ENCODE measurements at regions of chr11 and their contacts with region 1.

Region 1: DNA sequence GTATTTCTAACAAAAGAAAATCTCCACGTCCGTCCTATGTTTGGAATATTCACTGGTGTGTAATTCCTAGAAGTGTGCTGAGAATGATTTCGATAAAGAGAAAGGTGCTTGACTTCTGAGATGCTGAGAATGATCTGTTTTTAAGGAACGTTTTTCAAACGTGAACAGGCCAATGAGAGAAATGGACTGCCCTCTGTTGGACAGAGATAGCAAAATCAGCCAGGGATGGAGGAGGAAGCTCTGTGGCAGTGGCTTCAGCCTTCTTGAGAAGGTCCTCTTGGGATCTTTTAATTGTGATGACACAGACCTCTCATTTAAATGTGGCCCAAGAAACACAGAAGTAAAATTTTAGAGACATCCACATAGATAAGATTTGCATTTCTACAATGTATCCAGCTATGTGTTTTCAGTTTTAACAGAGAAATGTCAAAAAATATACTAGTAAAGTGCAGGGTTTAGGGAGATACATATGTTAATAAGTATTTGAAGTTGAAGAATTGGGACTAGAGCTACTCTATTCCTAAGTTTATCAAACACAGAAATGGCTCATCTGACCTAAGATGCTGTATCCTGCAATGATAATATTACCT is 84.0 kb upstream of the RCN1 start:
- DNase-seq: peak; percentile 51
- ATAC-seq: peak; percentile 85
- H3K4me3 ChIP-seq: no peak overlapping the region
- H3K27ac ChIP-seq: no peak overlapping the region
- H3K4me1 ChIP-seq: 0 out of 2 replicates have a peak, but pooled peaks cover under 1% of the 10 kb centered on the region
- H3K27me3 ChIP-seq: peaks cover 43% of the 10 kb centered on the region
- CTCF ChIP-seq: peak; percentile 63
- POLR2A ChIP-seq: no peak
- RAD21 ChIP-seq: peak; percentile 65

Region 2: DNA sequence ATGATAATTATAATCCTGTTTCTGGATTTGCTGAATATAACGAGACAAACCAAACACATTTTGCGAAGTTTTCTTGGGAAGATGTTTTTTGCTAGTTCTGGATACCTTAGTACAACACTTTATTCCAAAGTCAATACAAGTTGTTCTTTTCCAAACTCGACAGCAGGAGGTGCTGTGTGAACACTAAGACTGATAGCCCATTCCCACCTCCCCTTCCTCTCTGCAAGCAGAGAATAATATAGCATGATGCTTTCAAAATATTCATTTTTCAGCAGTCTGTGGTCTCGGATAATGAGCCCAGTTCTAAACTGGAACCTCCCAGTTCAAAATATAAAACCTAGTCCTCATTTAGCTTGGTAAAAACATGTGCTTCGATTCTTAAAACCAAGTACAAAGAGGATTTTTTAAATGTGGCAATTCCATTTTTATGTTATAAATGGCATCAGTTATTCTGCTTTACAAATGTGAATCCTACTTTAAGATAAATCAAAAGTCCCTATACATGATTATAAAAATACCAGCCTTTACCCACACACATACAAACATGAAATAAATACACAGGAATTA is 766.5 kb before region 1 on chr11:
- CTCF ChIA-PET with region 1: no interaction called
- POLR2A ChIA-PET with region 1: no interaction called
- dilution Hi-C with region 1: no loop called
- in situ Hi-C with region 1: no loop called
- intact Hi-C with region 1: loop called (anchors 5 kb)
- DNase-seq: peak; percentile 33
- ATAC-seq: no peak; the same call in 1 of the 2 replicates
- H3K4me3 ChIP-seq: no peak overlapping the region
- H3K27ac ChIP-seq: no peak overlapping the region
- H3K4me1 ChIP-seq: no peaks in the 10 kb centered on the region
- H3K27me3 ChIP-seq: no peaks in the 10 kb centered on the region
- CTCF ChIP-seq: peak; percentile 45
- POLR2A ChIP-seq: no peak
- RAD21 ChIP-seq: peak; percentile 43; the same call in 1 of the 2 replicates

Region 3: DNA sequence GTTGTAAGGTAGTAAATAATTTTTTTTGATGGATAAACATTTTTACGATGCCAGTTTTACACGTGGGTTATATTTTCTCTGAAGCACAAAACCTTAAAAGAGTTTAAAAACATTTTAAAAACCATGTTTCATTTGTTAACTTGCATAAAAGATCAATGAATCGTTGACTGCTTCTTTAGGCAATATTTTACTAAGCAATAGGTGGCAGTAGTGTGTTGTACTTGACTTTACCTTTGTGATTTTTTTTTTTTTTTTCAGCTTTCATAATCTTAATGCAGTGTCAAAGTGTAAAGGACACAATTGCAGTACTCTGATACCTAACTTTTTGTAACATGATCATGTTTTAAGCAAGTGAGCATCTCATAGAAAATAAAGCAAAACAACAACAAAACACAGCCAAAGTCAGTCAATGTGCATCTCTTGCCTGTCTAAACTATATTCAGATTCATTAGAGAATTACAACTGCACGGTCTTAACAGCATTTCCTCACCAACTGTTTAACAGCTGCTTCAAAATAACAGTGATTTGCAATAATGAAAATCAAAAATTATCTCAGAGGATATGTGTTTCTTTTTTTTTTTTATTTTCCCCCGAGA is 609.6 kb before region 1 on chr11:
- CTCF ChIA-PET with region 1: interaction called, 3 read pairs
- POLR2A ChIA-PET with region 1: no interaction called
- dilution Hi-C with region 1: no loop called
- in situ Hi-C with region 1: no loop called
- intact Hi-C with region 1: loop called (anchors 2 kb)
- DNase-seq: peak; percentile 22
- ATAC-seq: peak; percentile 54; the same call in 1 of the 2 replicates
- H3K4me3 ChIP-seq: no peak overlapping the region
- H3K27ac ChIP-seq: no peak overlapping the region
- H3K4me1 ChIP-seq: no peaks in the 10 kb centered on the region
- H3K27me3 ChIP-seq: no peaks in the 10 kb centered on the region
- CTCF ChIP-seq: peak; percentile 74
- POLR2A ChIP-seq: no peak
- RAD21 ChIP-seq: peak; percentile 77

Region 4: DNA sequence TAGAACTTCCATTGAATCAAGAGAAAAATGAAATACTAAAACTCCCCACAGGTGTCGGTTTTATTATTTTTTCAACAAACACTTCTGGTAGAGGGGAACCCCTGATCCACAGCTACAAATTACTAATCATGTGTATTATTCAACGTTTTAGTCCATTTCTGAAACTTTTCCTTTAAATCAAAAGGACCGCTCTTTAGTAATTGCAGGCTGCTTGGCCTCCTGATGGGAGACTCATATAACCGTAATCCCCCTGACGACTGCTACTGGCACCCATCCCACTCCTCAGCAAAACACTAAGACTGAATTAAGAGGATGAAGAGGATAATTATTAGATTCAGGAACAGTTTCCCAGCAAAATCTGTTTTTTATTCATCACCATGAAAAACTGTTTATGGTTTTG is 242.1 kb before region 1 on chr11:
- CTCF ChIA-PET with region 1: no interaction called
- POLR2A ChIA-PET with region 1: no interaction called
- dilution Hi-C with region 1: no loop called
- in situ Hi-C with region 1: no loop called
- intact Hi-C with region 1: no loop called
- DNase-seq: no peak
- ATAC-seq: no peak
- H3K4me3 ChIP-seq: no peak overlapping the region
- H3K27ac ChIP-seq: no peak overlapping the region
- H3K4me1 ChIP-seq: no peaks in the 10 kb centered on the region
- H3K27me3 ChIP-seq: no peaks in the 10 kb centered on the region
- CTCF ChIP-seq: no peak
- POLR2A ChIP-seq: no peak
- RAD21 ChIP-seq: no peak

Region 5: GRCh38 chr11:32081129-32081641 is 74.3 kb after region 1 on chr11:
- CTCF ChIA-PET with region 1: no interaction called
- POLR2A ChIA-PET with region 1: no interaction called
- dilution Hi-C with region 1: no loop called
- in situ Hi-C with region 1: no loop called
- intact Hi-C with region 1: no loop called
- DNase-seq: peak; percentile 64
- ATAC-seq: peak; percentile 82
- H3K4me3 ChIP-seq: no peak overlapping the region
- H3K27ac ChIP-seq: peak overlapping the region; percentile 7; the same call in 1 of the 2 replicates
- H3K4me1 ChIP-seq: peaks cover 3% of the 10 kb centered on the region; the same call in 1 of the 2 replicates
- H3K27me3 ChIP-seq: peaks cover 2% of the 10 kb centered on the region
- CTCF ChIP-seq: no peak
- POLR2A ChIP-seq: no peak
- RAD21 ChIP-seq: no peak